ENCODE measurements at regions of chr2 and their contacts with region 1.

Region 1: DNA sequence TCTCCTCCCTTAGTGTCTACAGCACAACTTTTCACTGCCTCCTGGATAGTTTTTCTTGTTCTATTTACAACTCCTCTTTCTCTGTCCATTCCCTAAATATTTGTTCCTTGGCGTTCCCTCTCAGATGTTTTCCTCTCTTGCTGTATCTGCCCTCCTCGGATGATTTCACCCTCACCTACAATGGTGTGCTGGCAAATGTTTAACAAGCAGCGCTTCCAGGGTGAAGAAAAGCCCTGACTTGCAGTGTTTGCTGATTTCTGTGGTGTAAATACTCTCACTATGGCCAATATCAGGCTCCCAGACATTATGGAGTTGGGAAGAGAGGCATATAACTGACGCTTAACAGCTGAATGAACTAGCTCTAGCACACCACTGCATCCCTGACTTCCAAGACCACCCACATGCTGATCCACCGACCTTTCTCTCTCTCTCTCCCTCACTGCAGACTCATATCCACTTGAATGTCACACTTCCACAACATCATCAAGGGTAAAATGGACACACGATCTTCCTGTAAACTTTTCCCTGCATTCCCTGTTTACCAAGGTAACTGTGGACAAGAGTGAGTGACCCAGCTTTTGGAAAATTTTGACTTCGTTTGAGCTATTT is 31.5 kb upstream of the SPTBN1 start:
- DNase-seq: no peak
- CTCF ChIP-seq: no peak

Region 2: GRCh38 chr2:54394392-54394791 is 30.3 kb before region 1 on chr2:
- CTCF ChIA-PET with region 1: no interaction called
- POLR2A ChIA-PET with region 1: no interaction called
- DNase-seq: no peak
- CTCF ChIP-seq: no peak

Region 3: GRCh38 chr2:54435325-54436226 is 10.9 kb after region 1 on chr2:
- CTCF ChIA-PET with region 1: interaction called, 12 read pairs
- POLR2A ChIA-PET with region 1: no interaction called
- DNase-seq: no peak
- CTCF ChIP-seq: no peak